IMR-90 (cell line): ENCODE measurements at regions of chr11 and their contacts with region 1.

Region 1: DNA sequence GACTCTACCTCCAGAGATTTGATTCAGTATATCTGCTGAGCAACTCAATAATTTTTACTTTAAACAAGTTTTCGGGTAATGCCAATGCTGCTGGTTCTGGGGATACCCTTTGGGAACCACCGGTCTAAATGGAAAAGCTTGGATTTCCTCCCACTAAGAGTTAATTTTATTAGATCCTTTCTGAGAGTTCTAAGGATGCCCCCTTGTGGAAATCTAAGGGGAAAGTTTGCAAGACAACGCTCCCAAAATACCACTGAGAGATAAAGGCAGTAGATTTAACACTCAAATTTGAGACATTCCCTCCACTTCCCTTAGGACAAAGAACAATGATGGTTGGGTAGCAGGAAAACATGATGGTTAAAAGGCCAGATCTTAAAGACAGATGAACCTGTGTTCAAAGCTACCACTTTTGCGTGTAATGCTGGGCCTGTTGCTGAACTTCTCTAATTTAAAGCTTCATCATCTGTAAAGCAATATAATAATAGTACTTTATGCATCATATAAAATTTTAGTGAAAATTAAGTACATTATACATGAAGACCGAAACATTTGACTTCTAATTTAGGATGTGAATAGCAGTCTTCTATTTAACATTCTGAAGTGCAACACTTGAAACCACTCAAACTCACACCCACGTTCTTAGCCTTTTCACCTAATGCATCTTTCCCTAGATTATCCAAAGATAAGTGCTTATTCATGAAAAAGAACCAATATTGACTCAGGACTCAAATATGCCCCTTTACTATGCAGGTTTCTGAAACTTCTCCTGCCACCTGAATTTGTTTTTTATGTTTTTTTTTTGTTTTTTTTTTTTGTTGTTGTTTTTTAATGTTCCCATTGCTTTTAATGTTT is 110.1 kb upstream of the LUZP2 start:
- DNase-seq: peak; percentile 68
- ATAC-seq: peak; percentile 75
- H3K4me3 ChIP-seq: no peak overlapping the region
- H3K27ac ChIP-seq: peak overlapping the region; percentile 22; the same call in 1 of the 2 replicates
- H3K4me1 ChIP-seq: peaks cover 3% of the 10 kb centered on the region; the same call in 1 of the 2 replicates
- H3K27me3 ChIP-seq: no peaks in the 10 kb centered on the region
- CTCF ChIP-seq: peak; percentile 71
- POLR2A ChIP-seq: no peak
- RAD21 ChIP-seq: peak; percentile 71

Region 2: GRCh38 chr11:23021287-23021863 is 1365.4 kb before region 1 on chr11:
- CTCF ChIA-PET with region 1: no interaction called
- POLR2A ChIA-PET with region 1: no interaction called
- dilution Hi-C with region 1: no loop called
- in situ Hi-C with region 1: loop called (anchors 25 kb)
- intact Hi-C with region 1: loop called (anchors 2 kb)
- DNase-seq: peak; percentile 51
- ATAC-seq: peak; percentile 86
- H3K4me3 ChIP-seq: no peak overlapping the region
- H3K27ac ChIP-seq: no peak overlapping the region
- H3K4me1 ChIP-seq: 0 out of 2 replicates have a peak, but pooled peaks cover 3% of the 10 kb centered on the region
- H3K27me3 ChIP-seq: no peaks in the 10 kb centered on the region
- CTCF ChIP-seq: peak; percentile 81
- POLR2A ChIP-seq: 0 out of 2 replicates have a peak, but pooled peaks have one; percentile 27
- RAD21 ChIP-seq: peak; percentile 85

Region 3: DNA sequence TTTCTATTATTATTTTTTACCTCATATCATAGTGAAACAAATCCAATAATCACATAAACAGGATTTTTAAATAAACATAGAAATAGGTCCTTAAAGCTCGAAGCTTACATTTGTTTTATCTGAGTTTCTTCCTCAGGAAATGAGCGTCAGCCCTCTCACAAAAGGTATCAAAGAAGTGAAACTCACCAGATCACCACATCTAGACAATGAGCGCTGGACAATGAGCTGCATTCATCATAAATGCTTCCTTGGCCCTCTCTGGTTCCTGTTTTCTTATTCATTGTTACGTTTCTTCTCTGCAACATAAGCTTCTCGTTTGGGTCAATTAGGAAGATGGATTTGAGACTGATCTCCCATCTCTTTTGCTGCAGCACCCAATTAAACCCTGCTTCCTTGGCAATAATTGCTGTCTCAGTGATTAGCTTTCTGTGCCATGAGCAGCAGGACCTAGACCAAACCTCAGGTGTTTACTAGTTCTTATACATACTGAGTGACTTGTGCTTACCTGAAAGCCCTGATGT is 539.8 kb before region 1 on chr11:
- CTCF ChIA-PET with region 1: no interaction called
- POLR2A ChIA-PET with region 1: no interaction called
- dilution Hi-C with region 1: no loop called
- in situ Hi-C with region 1: no loop called
- intact Hi-C with region 1: loop called (anchors 10 kb)
- DNase-seq: no peak
- ATAC-seq: no peak
- H3K4me3 ChIP-seq: no peak overlapping the region
- H3K27ac ChIP-seq: no peak overlapping the region
- H3K4me1 ChIP-seq: no peaks in the 10 kb centered on the region
- H3K27me3 ChIP-seq: no peaks in the 10 kb centered on the region
- CTCF ChIP-seq: no peak
- POLR2A ChIP-seq: no peak
- RAD21 ChIP-seq: no peak

Region 4: GRCh38 chr11:23991165-23991539 is 395.6 kb before region 1 on chr11:
- CTCF ChIA-PET with region 1: no interaction called
- POLR2A ChIA-PET with region 1: no interaction called
- dilution Hi-C with region 1: no loop called
- in situ Hi-C with region 1: no loop called
- intact Hi-C with region 1: loop called (anchors 1 kb)
- DNase-seq: peak; percentile 90
- ATAC-seq: peak; percentile 68
- H3K4me3 ChIP-seq: no peak overlapping the region
- H3K27ac ChIP-seq: peak overlapping the region; percentile 96
- H3K4me1 ChIP-seq: peaks cover 21% of the 10 kb centered on the region
- H3K27me3 ChIP-seq: no peaks in the 10 kb centered on the region
- CTCF ChIP-seq: no peak
- POLR2A ChIP-seq: no peak
- RAD21 ChIP-seq: no peak

Region 5: GRCh38 chr11:24880962-24881361 is 494.2 kb after region 1 on chr11:
- CTCF ChIA-PET with region 1: no interaction called
- POLR2A ChIA-PET with region 1: no interaction called
- dilution Hi-C with region 1: no loop called
- in situ Hi-C with region 1: no loop called
- intact Hi-C with region 1: no loop called
- DNase-seq: no peak
- ATAC-seq: no peak
- H3K4me3 ChIP-seq: no peak overlapping the region
- H3K27ac ChIP-seq: no peak overlapping the region
- H3K4me1 ChIP-seq: no peaks in the 10 kb centered on the region
- H3K27me3 ChIP-seq: no peaks in the 10 kb centered on the region
- CTCF ChIP-seq: no peak
- POLR2A ChIP-seq: no peak
- RAD21 ChIP-seq: no peak

Region 6: GRCh38 chr11:26227296-26227695 is 1840.5 kb after region 1 on chr11:
- CTCF ChIA-PET with region 1: no interaction called
- POLR2A ChIA-PET with region 1: no interaction called
- dilution Hi-C with region 1: no loop called
- in situ Hi-C with region 1: no loop called
- intact Hi-C with region 1: loop called (anchors 10 kb)
- DNase-seq: peak; percentile 94
- ATAC-seq: peak; percentile 86
- H3K4me3 ChIP-seq: peak overlapping the region; percentile 14; the same call in 1 of the 2 replicates
- H3K27ac ChIP-seq: no peak overlapping the region; the same call in 1 of the 2 replicates
- H3K4me1 ChIP-seq: peaks cover 19% of the 10 kb centered on the region
- H3K27me3 ChIP-seq: no peaks in the 10 kb centered on the region
- CTCF ChIP-seq: peak; percentile 85
- POLR2A ChIP-seq: no peak
- RAD21 ChIP-seq: peak; percentile 92